ENCODE measurements at regions of chr2 and their contacts with region 1.

Region 1: DNA sequence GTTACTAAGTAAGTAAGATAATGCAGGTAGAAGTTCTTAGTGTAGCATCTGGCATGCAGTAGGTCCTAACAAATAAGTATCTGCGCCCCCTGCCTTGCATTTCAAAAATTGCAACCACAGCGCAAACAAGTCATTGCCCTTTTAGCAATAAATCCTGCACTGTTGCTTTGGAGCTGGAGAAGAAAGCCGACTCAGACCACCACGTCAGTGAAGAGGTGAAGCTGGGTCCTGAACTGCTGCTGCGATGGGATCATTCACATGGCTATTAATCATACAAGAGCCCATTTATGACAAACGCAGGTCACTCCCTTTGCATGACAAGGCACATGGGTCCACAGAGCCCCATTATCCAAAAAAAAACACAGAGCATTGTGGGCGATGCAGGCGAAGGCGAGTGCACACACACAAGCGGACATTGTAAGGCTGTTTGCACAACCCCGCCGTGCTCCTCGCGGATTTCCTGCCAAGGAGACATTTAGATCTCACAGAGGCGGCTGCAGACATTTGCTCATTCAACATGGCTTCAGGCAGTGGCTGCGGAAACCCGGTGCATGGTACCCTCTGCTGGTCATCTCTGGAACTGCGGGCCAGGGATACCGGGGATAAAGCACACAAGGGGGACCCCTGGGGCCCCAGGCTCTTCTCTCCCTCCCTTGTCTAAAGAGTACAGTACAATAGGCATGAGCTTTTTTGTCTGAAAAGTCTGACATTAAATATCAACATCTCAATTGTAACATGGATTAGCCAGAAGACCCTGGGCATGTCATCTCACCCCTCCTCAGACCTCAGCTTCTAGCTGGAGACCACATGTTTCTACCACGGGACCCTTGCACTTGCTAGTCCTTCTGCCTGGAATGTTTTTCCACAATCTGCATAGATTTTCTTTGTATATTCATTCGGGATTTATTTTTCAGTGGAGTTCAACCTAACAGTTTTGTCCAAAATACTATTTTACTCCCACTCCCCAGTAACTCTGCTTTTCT is 56.7 kb downstream of the CYRIA start:
- DNase-seq: peak; percentile 80
- H3K4me3 Mint-ChIP-seq: peak overlapping the region; percentile 85
- H3K27ac Mint-ChIP-seq: peak overlapping the region; percentile 61
- H3K4me1 Mint-ChIP-seq: peaks cover 10% of the 10 kb centered on the region
- H3K27me3 Mint-ChIP-seq: no peaks in the 10 kb centered on the region

Region 2: GRCh38 chr2:16365366-16365765 is 243.6 kb before region 1 on chr2:
- intact Hi-C with region 1: no loop called
- DNase-seq: no peak
- H3K4me3 Mint-ChIP-seq: no peak overlapping the region
- H3K27ac Mint-ChIP-seq: no peak overlapping the region
- H3K4me1 Mint-ChIP-seq: no peaks in the 10 kb centered on the region
- H3K27me3 Mint-ChIP-seq: no peaks in the 10 kb centered on the region

Region 3: GRCh38 chr2:16525265-16525887 is 83.6 kb before region 1 on chr2:
- intact Hi-C with region 1: loop called (anchors 1 kb)
- DNase-seq: no peak
- H3K4me3 Mint-ChIP-seq: no peak overlapping the region
- H3K27ac Mint-ChIP-seq: no peak overlapping the region
- H3K4me1 Mint-ChIP-seq: no peaks in the 10 kb centered on the region
- H3K27me3 Mint-ChIP-seq: no peaks in the 10 kb centered on the region

Region 4: DNA sequence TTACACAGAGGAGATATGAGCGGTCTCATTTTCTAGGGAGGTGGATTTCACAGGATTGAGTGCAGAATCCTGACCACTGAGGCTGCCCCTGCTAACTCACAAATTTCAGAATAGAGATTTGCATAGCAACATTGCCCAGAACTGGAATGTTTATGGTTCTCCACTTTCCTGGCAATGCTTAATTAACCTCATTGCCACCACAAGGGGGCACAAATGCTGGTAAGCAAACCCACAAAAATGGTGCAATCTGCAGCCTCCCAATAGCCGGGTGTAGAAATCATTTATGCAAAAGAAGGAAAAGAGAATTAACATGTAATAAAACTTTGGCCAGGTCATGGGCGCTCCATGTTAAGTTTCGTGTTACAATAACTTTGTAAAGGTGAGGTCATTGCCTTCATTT is 55.7 kb before region 1 on chr2:
- intact Hi-C with region 1: loop called (anchors 1 kb)
- DNase-seq: no peak
- H3K4me3 Mint-ChIP-seq: no peak overlapping the region
- H3K27ac Mint-ChIP-seq: no peak overlapping the region
- H3K4me1 Mint-ChIP-seq: no peaks in the 10 kb centered on the region
- H3K27me3 Mint-ChIP-seq: no peaks in the 10 kb centered on the region

Region 5: GRCh38 chr2:16623031-16623430 is 14.1 kb after region 1 on chr2:
- intact Hi-C with region 1: loop called (anchors 1 kb)
- DNase-seq: no peak
- H3K4me3 Mint-ChIP-seq: no peak overlapping the region
- H3K27ac Mint-ChIP-seq: no peak overlapping the region
- H3K4me1 Mint-ChIP-seq: peaks cover 38% of the 10 kb centered on the region
- H3K27me3 Mint-ChIP-seq: no peaks in the 10 kb centered on the region

Region 6: DNA sequence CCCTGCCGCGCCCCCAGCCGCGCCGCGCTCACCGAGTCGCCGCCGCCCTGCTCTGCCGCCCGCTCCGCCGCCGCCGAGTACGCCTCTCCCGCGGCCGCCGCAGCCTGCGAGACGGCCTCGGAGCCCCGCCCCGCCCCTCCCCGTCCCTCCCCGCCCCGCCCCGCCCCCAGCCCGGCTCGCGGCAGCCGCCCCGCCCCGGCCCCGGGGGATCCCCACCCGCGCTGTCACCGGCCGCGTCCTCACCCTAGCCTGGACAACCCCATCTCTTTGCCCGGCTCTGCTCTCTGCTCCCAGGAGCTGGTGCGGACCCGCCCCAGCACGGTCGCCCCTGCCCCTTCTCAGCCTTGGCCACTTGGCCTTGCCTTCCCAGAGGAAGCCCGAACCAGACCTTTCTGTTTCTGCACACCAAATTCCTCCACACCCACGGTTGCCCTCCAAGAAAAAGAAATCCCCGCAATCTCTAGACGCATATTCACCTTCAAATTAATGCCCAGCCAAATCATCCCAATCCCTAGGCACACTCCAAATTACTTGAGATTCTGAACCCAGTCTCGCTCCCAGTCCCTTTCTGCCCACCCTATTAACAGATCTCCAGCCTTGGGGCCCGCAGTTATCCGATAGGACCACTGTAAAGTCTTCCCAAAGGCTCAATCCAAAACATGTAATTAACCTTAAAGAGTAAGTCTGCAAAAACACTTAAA is 56.9 kb after region 1 on chr2 and contains the start of gene CYRIA:
- intact Hi-C with region 1: loop called (anchors 2 kb)
- DNase-seq: peak; percentile 54
- H3K4me3 Mint-ChIP-seq: peak within 1 kb of the TSS; percentile 86
- H3K27ac Mint-ChIP-seq: peak within 1 kb of the TSS; percentile 82
- H3K4me1 Mint-ChIP-seq: peaks cover 16% of the 10 kb centered on the region
- H3K27me3 Mint-ChIP-seq: peaks cover 22% of the 10 kb centered on the region
- total RNA-seq, gene CYRIA: 0.65 and 0.88 TPM in 2 replicates

Region 7: DNA sequence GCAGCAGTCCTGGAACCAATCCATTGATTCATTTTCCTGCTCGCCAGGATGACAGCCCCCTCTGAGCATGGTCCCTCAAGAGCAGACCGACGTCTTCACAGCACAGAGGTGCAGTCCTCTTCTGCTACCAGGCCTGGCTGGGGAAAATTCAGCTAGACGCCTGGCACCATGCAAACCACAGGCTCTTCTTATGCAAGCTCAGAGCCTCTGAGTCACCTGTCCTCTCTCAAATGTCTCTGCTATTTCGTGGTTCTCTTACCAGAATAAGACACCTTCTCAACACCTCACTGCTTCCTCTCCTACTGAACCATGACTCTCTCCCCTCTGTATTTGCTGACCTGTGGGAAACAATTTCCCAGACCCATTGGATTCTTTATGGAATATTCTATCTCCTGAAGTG is 136.5 kb after region 1 on chr2:
- intact Hi-C with region 1: no loop called
- DNase-seq: no peak
- H3K4me3 Mint-ChIP-seq: no peak overlapping the region
- H3K27ac Mint-ChIP-seq: no peak overlapping the region
- H3K4me1 Mint-ChIP-seq: peaks cover 26% of the 10 kb centered on the region
- H3K27me3 Mint-ChIP-seq: peaks cover 2% of the 10 kb centered on the region

Region 8: DNA sequence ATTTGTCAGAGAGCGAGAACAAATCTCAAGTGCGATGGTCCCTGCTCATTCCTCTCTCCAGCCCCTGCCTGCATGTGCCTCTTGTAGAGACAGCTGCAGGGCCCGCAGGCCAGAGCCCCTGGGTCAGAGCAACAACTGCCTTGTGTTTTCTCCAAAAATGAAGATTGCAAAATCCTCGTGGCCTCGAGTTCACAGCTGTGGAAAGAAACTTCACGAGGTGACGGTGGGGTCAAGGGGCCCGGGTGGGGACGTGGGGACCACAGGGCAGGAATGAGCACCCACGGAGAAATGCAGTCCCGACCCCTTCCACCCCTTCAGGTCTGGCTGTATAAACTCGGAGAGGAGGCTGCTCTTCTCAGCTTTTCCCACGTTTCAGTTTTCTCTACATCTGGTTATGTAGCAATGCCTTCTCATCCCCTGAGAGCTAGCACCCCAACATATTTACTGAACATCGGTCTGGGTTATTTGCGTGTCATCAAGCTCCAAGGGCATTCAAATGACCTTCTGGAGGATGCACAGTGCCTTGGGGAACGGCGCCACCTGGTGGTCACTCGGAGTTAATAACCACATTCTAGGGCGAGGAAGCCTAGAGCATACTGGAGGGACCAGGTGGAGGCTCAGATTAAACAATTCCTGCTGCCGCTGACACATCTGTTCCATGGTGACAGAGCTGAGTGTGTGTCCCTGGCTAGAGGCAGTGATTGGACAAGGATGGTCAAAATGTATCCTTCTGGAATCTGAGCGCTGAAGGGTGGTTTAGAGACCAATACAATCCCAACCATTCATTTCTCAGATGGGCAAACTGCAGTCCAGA is 148.1 kb after region 1 on chr2:
- intact Hi-C with region 1: loop called (anchors 1 kb)
- DNase-seq: peak; percentile 47
- H3K4me3 Mint-ChIP-seq: no peak overlapping the region
- H3K27ac Mint-ChIP-seq: no peak overlapping the region
- H3K4me1 Mint-ChIP-seq: no peaks in the 10 kb centered on the region
- H3K27me3 Mint-ChIP-seq: peaks cover 2% of the 10 kb centered on the region

Measured in activated T-helper 1 cell treated with anti-CD3 and anti-CD28 coated beads, Interleukin-12 subunit alpha, Interleukin-12 subunit beta, Interleukin-2, Interleukin-4 antibody, amounts not matched to agents 30 ng/mL and 10 ng/mL and 1 ng/mL, durations not matched to agents 14 hours and 24 hours and 36 hours (primary cell).